Activated naive CD4-positive, alpha-beta T cell treated with anti-CD3 and anti-CD28 coated beads for 36 hours (primary cell): ENCODE measurements at regions of chr16 and their contacts with region 1.

Region 1: GRCh38 chr16:47037746-47038458 is 64.4 kb upstream of the DNAJA2 start:
- DNase-seq: peak; percentile 91
- H3K4me3 Mint-ChIP-seq: peak overlapping the region; percentile 74
- H3K27ac Mint-ChIP-seq: no peak overlapping the region
- H3K4me1 Mint-ChIP-seq: peaks cover 8% of the 10 kb centered on the region
- H3K27me3 Mint-ChIP-seq: peaks cover 10% of the 10 kb centered on the region

Region 2: DNA sequence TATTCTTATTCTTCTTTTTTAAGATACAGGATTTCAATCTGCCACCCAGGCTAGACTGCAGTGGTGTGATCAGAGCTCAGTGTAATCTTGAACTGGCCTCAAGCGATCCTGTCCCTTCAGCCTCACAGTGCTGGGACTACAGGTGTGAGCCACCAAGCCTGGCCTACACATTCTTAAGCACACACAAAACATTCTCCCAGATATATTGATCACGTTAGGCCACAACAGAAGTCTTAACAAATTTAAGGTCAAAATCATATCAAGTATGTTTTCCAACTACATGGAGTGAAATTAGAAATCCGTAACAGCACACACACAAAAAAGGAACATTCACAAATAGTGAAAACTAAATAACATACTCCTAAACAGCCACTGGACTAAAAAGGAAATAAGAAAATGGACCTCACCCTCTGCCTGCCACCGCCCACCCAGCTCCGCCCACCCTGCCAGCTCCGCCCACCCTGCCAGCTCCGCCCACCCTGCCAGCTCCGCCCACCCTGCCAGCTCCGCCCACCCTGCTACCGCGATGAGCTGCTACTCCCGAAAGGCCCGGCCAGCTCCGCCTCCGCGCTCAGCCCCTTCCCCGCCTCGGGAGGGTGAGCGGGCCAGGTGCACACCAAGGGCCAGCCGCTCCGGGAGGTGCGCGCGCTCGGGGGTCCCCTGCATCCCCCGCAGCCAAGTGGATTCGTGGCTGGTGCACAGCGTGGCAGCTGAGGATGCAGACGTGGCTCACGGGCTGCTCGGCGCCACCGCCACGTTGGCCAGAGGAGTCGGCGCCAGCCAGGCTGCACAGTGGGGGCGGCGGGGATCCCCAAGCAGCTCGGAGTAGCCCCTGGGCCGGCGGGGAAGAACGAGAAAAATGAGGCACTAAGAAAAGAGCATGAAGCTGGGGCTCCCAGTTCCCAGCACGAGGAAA is 248.1 kb before region 1 on chr16:
- CTCF ChIA-PET with region 1: no interaction called
- intact Hi-C with region 1: no loop called
- DNase-seq: peak; percentile 85
- H3K4me3 Mint-ChIP-seq: peak overlapping the region; percentile 74
- H3K27ac Mint-ChIP-seq: no peak overlapping the region
- H3K4me1 Mint-ChIP-seq: peaks cover 23% of the 10 kb centered on the region
- H3K27me3 Mint-ChIP-seq: no peaks in the 10 kb centered on the region

Region 3: DNA sequence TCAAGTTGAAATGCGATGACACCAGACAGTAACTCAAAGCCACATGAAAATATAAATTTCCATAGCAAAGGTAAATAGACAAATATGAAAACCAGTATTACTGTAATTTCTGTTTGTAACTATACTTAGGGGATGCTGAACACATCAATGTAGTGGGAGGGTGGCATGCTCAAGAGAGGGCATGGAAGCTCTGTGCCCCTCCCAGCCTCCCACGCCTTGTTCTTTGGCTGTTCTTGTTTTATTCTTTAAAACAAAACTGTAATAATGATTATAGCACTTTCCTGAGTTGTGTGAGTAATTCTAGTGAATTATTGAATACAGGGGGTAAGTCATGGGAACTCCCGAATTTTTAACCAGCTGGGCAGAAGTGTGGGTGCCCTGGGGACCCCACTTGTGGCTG is 164.7 kb before region 1 on chr16:
- CTCF ChIA-PET with region 1: no interaction called
- intact Hi-C with region 1: no loop called
- DNase-seq: no peak
- H3K4me3 Mint-ChIP-seq: no peak overlapping the region
- H3K27ac Mint-ChIP-seq: no peak overlapping the region
- H3K4me1 Mint-ChIP-seq: no peaks in the 10 kb centered on the region
- H3K27me3 Mint-ChIP-seq: no peaks in the 10 kb centered on the region

Region 4: DNA sequence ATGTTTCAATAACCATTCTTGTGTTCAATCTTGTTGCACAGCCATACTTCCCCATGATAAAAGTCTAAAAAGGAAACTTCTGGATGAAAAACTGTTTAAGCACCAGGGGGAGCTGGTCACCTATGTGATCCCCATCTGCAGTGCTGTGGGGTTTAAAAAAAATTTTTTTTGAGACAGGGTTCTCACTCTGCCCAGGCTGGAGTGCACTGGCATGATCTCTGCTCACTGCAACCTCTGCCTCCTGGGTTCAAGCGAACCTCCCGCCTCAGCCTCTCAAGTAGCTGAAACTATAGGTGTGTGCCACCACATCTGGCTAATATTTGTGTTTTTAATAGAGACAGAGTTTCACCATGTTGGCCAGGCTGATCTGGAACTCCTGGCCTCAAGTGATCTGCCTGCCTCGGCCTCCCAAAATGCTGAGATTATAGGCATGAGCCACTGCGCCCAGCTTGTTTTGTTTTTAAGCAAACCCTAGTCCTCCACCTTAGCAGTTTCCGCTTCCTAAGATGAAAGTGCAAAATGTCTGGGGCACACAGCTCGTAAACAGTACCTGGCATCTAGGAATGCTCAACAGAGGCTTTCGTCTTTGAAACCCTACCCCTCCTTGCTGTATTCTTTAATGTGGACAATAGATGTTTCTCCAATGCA is 89.9 kb before region 1 on chr16:
- CTCF ChIA-PET with region 1: interaction called, 6 read pairs
- intact Hi-C with region 1: loop called (anchors 1 kb)
- DNase-seq: peak; percentile 63
- H3K4me3 Mint-ChIP-seq: no peak overlapping the region
- H3K27ac Mint-ChIP-seq: no peak overlapping the region
- H3K4me1 Mint-ChIP-seq: peaks cover 14% of the 10 kb centered on the region
- H3K27me3 Mint-ChIP-seq: no peaks in the 10 kb centered on the region

Region 5: GRCh38 chr16:47049901-47050583 is 12.1 kb after region 1 on chr16:
- CTCF ChIA-PET with region 1: interaction called, 15 read pairs
- intact Hi-C with region 1: no loop called
- DNase-seq: no peak
- H3K4me3 Mint-ChIP-seq: no peak overlapping the region
- H3K27ac Mint-ChIP-seq: no peak overlapping the region
- H3K4me1 Mint-ChIP-seq: peaks cover 12% of the 10 kb centered on the region
- H3K27me3 Mint-ChIP-seq: no peaks in the 10 kb centered on the region

Region 6: GRCh38 chr16:47229053-47230050 is 191.4 kb after region 1 on chr16:
- CTCF ChIA-PET with region 1: no interaction called
- intact Hi-C with region 1: no loop called
- DNase-seq: no peak
- H3K4me3 Mint-ChIP-seq: no peak overlapping the region
- H3K27ac Mint-ChIP-seq: no peak overlapping the region
- H3K4me1 Mint-ChIP-seq: no peaks in the 10 kb centered on the region
- H3K27me3 Mint-ChIP-seq: no peaks in the 10 kb centered on the region

Region 7: GRCh38 chr16:47599512-47599911 is 561.6 kb after region 1 on chr16:
- CTCF ChIA-PET with region 1: no interaction called
- intact Hi-C with region 1: no loop called
- DNase-seq: no peak
- H3K4me3 Mint-ChIP-seq: no peak overlapping the region
- H3K27ac Mint-ChIP-seq: no peak overlapping the region
- H3K4me1 Mint-ChIP-seq: no peaks in the 10 kb centered on the region
- H3K27me3 Mint-ChIP-seq: no peaks in the 10 kb centered on the region

Region 8: GRCh38 chr16:48054881-48055601 is 1017.1 kb after region 1 on chr16:
- CTCF ChIA-PET with region 1: no interaction called
- intact Hi-C with region 1: loop called (anchors 5 kb)
- DNase-seq: peak; percentile 55
- H3K4me3 Mint-ChIP-seq: no peak overlapping the region
- H3K27ac Mint-ChIP-seq: no peak overlapping the region
- H3K4me1 Mint-ChIP-seq: peaks cover 3% of the 10 kb centered on the region
- H3K27me3 Mint-ChIP-seq: peaks cover 29% of the 10 kb centered on the region

Region 9: DNA sequence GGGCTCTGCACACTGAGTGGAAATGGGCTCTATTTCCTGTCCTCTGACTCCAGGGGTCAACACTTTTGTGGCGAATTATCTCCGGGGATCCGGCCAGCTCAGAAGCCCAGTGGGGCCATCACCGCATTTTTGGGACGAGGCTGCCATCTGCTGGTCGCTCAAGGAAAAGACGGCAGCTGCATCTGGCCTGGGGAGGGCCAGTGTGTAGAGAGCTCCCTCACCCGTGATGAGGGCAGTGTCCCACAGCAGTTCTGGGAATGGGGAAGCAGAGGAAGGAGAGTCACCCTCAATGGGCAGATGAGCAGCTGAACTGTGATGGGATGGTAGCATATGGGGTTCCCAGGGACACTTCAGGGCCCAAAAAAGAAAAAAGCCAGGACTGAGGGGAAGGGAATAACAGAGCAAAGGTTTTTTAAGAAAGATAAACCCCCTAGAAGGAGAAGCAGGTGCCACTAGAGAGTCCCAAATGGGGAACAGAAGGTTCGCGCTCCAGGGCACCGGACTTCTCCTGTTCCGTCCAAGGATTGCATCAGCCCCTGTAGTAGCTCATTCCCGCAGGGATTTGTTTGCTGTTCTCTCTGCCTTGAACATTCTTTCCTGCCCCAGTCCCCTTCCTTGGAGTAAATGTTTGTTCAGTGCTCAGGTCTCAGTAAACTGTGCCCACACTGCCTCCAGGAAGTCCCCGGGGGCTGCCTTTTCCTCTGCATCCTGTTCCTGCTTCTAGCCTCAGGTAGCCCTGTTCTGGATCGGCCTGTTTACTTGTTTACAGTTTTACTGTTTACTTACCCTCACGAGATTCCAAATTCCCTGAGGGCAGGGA is 1127.2 kb after region 1 on chr16:
- CTCF ChIA-PET with region 1: interaction called, 4 read pairs
- intact Hi-C with region 1: loop called (anchors 2 kb)
- DNase-seq: peak; percentile 78
- H3K4me3 Mint-ChIP-seq: no peak overlapping the region
- H3K27ac Mint-ChIP-seq: peak overlapping the region; percentile 61
- H3K4me1 Mint-ChIP-seq: peaks cover 4% of the 10 kb centered on the region
- H3K27me3 Mint-ChIP-seq: peaks cover 13% of the 10 kb centered on the region